HepG2 (cell line): ENCODE measurements at regions of chr16 and their contacts with region 1.

Region 1: DNA sequence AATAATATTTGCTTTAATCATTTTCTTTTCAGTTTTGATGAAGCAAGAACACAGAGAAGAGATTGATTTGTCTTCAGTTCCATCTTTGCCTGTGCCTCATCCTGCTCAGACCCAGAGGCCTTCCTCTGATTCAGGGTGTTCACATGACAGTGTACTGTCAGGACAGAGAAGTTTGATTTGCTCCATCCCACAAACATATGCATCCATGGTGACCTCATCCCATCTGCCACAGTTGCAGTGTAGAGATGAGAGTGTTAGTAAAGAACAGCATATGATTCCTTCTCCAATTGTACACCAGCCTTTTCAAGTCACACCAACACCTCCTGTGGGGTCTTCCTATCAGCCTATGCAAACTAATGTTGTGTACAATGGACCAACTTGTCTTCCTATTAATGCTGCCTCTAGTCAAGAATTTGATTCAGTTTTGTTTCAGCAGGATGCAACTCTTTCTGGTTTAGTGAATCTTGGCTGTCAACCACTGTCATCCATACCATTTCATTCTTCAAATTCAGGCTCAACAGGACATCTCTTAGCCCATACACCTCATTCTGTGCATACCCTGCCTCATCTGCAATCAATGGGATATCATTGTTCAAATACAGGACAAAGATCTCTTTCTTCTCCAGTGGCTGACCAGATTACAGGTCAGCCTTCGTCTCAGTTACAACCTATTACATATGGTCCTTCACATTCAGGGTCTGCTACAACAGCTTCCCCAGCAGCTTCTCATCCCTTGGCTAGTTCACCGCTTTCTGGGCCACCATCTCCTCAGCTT is 45.0 kb downstream of the ESRP2 start:
- DNase-seq: peak; percentile 32
- ATAC-seq: peak; percentile 47
- H3K4me3 ChIP-seq: no peak overlapping the region
- H3K27ac ChIP-seq: no peak overlapping the region
- H3K4me1 ChIP-seq: peaks cover 11% of the 10 kb centered on the region
- H3K27me3 ChIP-seq: no peaks in the 10 kb centered on the region
- CTCF ChIP-seq: no peak
- EP300 ChIP-seq: no peak
- POLR2A ChIP-seq: no peak
- RAD21 ChIP-seq: no peak

Region 2: GRCh38 chr16:68206245-68206644 is 15.3 kb after region 1 on chr16:
- CTCF ChIA-PET with region 1: no interaction called
- POLR2A ChIA-PET with region 1: no interaction called
- in situ Hi-C with region 1: no loop called
- intact Hi-C with region 1: no loop called
- DNase-seq: no peak
- ATAC-seq: no peak
- H3K4me3 ChIP-seq: no peak overlapping the region
- H3K27ac ChIP-seq: no peak overlapping the region
- H3K4me1 ChIP-seq: no peaks in the 10 kb centered on the region
- H3K27me3 ChIP-seq: no peaks in the 10 kb centered on the region
- CTCF ChIP-seq: no peak
- EP300 ChIP-seq: no peak
- POLR2A ChIP-seq: no peak
- RAD21 ChIP-seq: no peak

Region 3: DNA sequence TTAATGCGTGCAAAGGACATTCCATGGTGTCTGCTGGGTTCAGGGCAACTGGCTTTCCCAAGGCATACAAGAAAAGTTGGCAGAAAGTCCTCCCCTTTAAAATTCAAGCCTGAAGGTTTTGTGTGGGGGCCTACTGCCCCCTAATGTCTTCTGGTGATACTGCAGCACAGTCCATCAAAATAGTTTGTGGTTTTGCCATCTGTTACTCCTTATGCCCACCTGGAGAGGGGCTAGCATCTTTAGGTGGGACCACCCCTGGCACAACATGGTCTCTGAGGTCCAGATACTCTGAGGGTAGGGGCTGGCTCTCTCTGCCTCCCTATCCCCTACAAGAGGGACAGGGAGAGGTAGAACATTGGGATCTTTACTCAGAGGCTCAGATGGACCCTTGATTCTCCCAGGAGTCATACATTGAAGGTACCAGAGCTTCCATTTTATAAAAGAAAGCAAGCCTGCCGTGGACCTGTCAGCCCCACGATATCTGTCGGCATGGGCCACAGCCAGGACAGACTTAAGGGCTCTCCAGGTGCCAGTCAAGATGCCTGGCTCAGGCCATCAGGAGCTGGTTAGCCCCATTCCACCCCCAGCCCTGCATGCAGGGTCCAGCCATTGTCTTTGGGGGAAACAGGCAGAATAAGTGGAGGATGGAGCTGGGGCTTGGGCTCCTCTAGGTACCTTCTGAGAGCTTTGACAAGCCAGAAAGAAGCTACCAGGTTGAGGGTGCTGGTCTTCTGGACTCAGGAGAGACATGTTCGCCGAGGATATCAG is 38.7 kb after region 1 on chr16:
- CTCF ChIA-PET with region 1: no interaction called
- POLR2A ChIA-PET with region 1: no interaction called
- in situ Hi-C with region 1: no loop called
- intact Hi-C with region 1: loop called (anchors 5 kb)
- DNase-seq: peak; percentile 64
- ATAC-seq: peak; percentile 1; the same call in 1 of the 3 replicates
- H3K4me3 ChIP-seq: no peak overlapping the region
- H3K27ac ChIP-seq: no peak overlapping the region
- H3K4me1 ChIP-seq: peaks cover 38% of the 10 kb centered on the region
- H3K27me3 ChIP-seq: no peaks in the 10 kb centered on the region
- CTCF ChIP-seq: peak; percentile 80
- EP300 ChIP-seq: no peak
- POLR2A ChIP-seq: no peak; a peak in 1 of 4 replicates
- RAD21 ChIP-seq: peak; percentile 75

Region 4: DNA sequence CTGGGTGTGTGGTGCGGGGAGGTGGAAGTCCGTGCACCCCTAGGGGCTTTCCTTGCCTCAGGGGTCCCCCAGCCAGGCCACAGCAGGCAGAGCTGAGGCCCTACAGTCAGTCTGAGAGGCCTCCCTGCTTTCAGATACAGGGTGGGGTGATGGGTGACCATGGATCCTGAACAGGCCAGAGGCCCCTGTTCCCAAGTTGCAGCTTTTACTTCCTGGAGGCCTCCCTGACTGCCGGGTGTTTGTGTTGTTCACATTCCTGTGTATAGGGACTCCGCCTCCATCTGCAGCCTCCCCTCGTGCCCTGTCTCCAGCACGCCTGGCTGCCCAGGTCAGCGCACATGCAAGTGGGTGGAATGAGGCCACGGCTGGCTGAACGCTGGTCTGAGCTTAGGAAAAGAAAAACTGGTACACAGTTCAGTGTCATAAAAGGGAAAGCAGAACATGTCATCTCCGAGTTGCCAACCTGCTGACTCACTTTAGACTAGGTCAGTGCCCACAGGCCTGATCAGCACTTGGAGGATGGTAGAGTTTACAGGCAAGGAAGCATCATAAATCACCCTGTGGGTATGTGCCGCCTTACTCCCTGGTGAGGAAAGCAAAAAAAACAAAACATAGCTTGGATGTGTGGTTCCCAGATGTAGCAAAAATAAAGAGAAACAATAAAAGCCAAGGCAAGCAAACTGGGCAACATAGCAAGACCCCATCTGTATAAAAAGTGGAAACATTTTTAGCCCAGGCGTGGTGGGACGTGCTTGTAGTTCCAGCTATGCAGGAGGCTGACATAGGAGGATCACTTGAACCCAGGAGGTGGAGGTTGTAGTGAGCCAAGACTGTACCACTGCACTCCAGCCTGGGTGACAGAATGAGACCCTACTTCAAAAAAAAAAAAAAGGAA is 67.2 kb after region 1 on chr16:
- CTCF ChIA-PET with region 1: no interaction called
- POLR2A ChIA-PET with region 1: no interaction called
- in situ Hi-C with region 1: no loop called
- intact Hi-C with region 1: no loop called
- DNase-seq: peak; percentile 95
- ATAC-seq: peak; percentile 89
- H3K4me3 ChIP-seq: peak overlapping the region in 1 of 3 experiments; percentile 47; a peak in 2 of 6 replicates
- H3K27ac ChIP-seq: peak overlapping the region; percentile 87
- H3K4me1 ChIP-seq: peaks cover 45% of the 10 kb centered on the region
- H3K27me3 ChIP-seq: no peaks in the 10 kb centered on the region
- CTCF ChIP-seq: peak; percentile 34; the same call in 1 of the 2 replicates
- EP300 ChIP-seq: peak; percentile 42 to 68; a peak in 3 of 4 replicates
- POLR2A ChIP-seq: peak; percentile 19 to 24; a peak in 1 of 4 replicates
- RAD21 ChIP-seq: no peak

Region 5: DNA sequence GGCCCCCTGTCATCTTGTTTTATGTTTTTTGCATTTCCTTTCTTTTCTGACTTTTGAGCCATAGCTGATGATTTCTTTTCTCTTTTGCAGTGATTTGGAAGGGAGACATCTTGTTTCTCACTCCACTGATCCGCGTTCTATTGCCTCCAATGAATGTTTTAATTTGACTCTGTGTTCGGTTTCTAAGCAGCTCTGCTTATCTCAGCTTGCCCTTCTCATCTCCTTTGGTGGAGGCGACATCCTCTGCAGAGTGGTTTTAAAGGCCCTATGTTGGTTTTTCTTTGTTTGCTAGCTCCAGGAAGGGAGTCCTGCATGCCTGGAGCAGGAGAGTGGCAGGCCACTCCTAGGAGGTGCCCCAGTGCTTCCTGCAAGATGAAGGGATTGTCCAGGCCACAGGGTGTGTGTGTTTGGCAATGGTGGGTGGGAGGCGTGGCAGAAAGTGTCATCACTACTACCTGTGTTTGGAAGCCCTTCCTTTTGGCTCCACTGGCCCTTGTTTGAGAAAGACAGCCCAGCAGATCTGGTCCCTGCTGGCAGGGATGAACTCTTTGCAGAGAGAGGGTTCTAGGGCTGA is 243.8 kb after region 1 on chr16:
- CTCF ChIA-PET with region 1: no interaction called
- POLR2A ChIA-PET with region 1: no interaction called
- in situ Hi-C with region 1: no loop called
- intact Hi-C with region 1: no loop called
- DNase-seq: no peak
- ATAC-seq: peak; percentile 31; the same call in 1 of the 3 replicates
- H3K4me3 ChIP-seq: no peak overlapping the region
- H3K27ac ChIP-seq: no peak overlapping the region
- H3K4me1 ChIP-seq: no peaks in the 10 kb centered on the region
- H3K27me3 ChIP-seq: no peaks in the 10 kb centered on the region
- CTCF ChIP-seq: no peak
- EP300 ChIP-seq: no peak
- POLR2A ChIP-seq: no peak
- RAD21 ChIP-seq: no peak